ENCODE measurements at regions of chr7 and their contacts with region 1.

Region 1: GRCh38 chr7:155380221-155380861 is 77.6 kb upstream of the EN2 start:
- DNase-seq: peak in 9 of 10 donors; percentile 46 to 88 (median 61)
- H3K4me3 ChIP-seq: peak overlapping the region in 4 of 59 donors; percentile 49 to 72 (median 66)
- H3K27ac ChIP-seq: no peak overlapping the region
- H3K27me3 ChIP-seq: peaks cover 22 to 98% (median 84%) of the 10 kb centered on the region in 45 donors
- CTCF ChIP-seq: peak; percentile 19 to 92 (median 68)

Region 2: GRCh38 chr7:154746571-154747360 is 633.6 kb before region 1 on chr7:
- intact Hi-C with region 1: no loop called
- DNase-seq: no peak
- H3K4me3 ChIP-seq: peak overlapping the region in 3 of 59 donors; percentile 1 to 4 (median 4)
- H3K27ac ChIP-seq: peak overlapping the region; percentile 26 to 95 (median 83)
- H3K27me3 ChIP-seq: no peaks in the 10 kb centered on the region
- CTCF ChIP-seq: peak in 11 of 56 donors; percentile 6 to 35 (median 15)

Region 3: GRCh38 chr7:155392726-155393570 is 12.6 kb after region 1 on chr7:
- intact Hi-C with region 1: loop called in 1 of 2 experiments (anchors 1 kb)
- DNase-seq: no peak
- H3K4me3 ChIP-seq: no peak overlapping the region
- H3K27ac ChIP-seq: peak overlapping the region in 3 of 59 donors; percentile 28 to 43 (median 30)
- H3K27me3 ChIP-seq: peaks cover 0 to 11% (median 0%) of the 10 kb centered on the region in 45 donors
- CTCF ChIP-seq: no peak

Region 4: DNA sequence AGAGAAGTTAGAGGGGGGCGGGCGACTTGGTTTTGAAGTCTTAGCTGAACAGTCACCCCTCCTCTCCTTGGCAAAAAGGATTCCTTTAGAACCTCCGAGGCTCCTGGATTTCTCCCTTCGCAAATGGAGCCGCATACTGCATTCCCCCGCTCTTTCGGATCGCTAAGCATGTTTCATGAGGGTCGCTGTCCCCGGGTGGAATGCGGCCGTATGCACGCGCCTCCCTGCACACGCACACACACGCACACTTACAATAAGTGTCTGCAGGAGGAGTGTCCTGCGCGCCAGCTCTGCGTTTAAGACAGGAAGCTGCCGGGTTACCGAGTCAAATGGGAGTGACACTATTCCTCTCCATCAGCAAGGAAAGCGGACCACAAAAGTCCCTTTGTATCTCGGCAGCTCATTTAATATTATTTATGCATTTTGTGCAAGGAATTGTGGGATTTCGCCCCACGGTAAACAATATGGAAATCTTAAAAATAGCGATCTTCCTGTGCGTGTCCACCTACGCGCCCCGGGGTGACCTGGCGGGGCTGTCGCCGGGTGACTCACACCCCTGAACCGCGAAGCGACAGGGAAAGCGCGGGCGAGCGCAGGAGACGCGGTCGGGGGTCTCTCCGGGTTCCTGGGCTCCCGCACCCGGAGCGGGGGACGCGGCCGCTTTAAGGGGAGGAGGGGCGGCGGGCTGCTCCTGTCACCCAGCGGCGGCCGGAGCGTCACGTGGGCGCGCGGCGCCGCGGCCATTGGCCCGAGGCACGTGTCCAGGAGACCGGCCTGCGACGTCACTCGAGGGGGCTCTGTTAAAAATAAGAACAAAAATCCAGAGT is 76.6 kb after region 1 on chr7:
- intact Hi-C with region 1: loop called (anchors 2 to 5 kb)
- DNase-seq: peak; percentile 67 to 95 (median 78)
- H3K4me3 ChIP-seq: peak overlapping the region; percentile 23 to 76 (median 59)
- H3K27ac ChIP-seq: peak overlapping the region in 10 of 59 donors; percentile 10 to 97 (median 54)
- H3K27me3 ChIP-seq: peaks cover 21 to 96% (median 95%) of the 10 kb centered on the region in 45 donors
- CTCF ChIP-seq: no peak

Region 5: GRCh38 chr7:155644178-155644970 is 264.0 kb after region 1 on chr7 and contains the start of gene RBM33:
- intact Hi-C with region 1: loop called in 1 of 2 experiments (anchors 10 kb)
- DNase-seq: peak; percentile 63 to 84 (median 74)
- H3K4me3 ChIP-seq: peak within 1 kb of the TSS; percentile 78 to 100 (median 97)
- H3K27ac ChIP-seq: peak within 1 kb of the TSS; percentile 71 to 99 (median 94)
- H3K27me3 ChIP-seq: no peaks in the 10 kb centered on the region
- CTCF ChIP-seq: peak in 23 of 56 donors; percentile 1 to 61 (median 27)
- total RNA-seq, gene RBM33: 60.5 to 127 (median 90.5) TPM

Region 6: GRCh38 chr7:155763691-155764437 is 383.5 kb after region 1 on chr7:
- intact Hi-C with region 1: loop called in 1 of 2 experiments (anchors 10 kb)
- DNase-seq: no peak
- H3K4me3 ChIP-seq: no peak overlapping the region
- H3K27ac ChIP-seq: peak overlapping the region in 21 of 59 donors; percentile 5 to 70 (median 25)
- H3K27me3 ChIP-seq: no peaks in the 10 kb centered on the region
- CTCF ChIP-seq: no peak

Region 7: GRCh38 chr7:155844019-155844453 is 463.7 kb after region 1 on chr7:
- intact Hi-C with region 1: no loop called
- DNase-seq: peak in 1 of 10 donors; percentile 26
- H3K4me3 ChIP-seq: no peak overlapping the region
- H3K27ac ChIP-seq: no peak overlapping the region
- H3K27me3 ChIP-seq: peaks cover 0 to 18% (median 0%) of the 10 kb centered on the region in 45 donors
- CTCF ChIP-seq: no peak